Activated T-helper 1 cell treated with anti-CD3 and anti-CD28 coated beads, Interleukin-12 subunit alpha, Interleukin-12 subunit beta, Interleukin-2, Interleukin-4 antibody, amounts not matched to agents 30 ng/mL and 10 ng/mL and 1 ng/mL, durations not matched to agents 14 hours and 24 hours and 36 hours (primary cell): ENCODE measurements at regions of chr6 and their contacts with region 1.

Region 1: GRCh38 chr6:54717849-54718455 is 128.6 kb upstream of the FAM83B start:
- DNase-seq: no peak
- H3K4me3 Mint-ChIP-seq: no peak overlapping the region
- H3K27ac Mint-ChIP-seq: no peak overlapping the region
- H3K4me1 Mint-ChIP-seq: no peaks in the 10 kb centered on the region
- H3K27me3 Mint-ChIP-seq: no peaks in the 10 kb centered on the region

Region 2: DNA sequence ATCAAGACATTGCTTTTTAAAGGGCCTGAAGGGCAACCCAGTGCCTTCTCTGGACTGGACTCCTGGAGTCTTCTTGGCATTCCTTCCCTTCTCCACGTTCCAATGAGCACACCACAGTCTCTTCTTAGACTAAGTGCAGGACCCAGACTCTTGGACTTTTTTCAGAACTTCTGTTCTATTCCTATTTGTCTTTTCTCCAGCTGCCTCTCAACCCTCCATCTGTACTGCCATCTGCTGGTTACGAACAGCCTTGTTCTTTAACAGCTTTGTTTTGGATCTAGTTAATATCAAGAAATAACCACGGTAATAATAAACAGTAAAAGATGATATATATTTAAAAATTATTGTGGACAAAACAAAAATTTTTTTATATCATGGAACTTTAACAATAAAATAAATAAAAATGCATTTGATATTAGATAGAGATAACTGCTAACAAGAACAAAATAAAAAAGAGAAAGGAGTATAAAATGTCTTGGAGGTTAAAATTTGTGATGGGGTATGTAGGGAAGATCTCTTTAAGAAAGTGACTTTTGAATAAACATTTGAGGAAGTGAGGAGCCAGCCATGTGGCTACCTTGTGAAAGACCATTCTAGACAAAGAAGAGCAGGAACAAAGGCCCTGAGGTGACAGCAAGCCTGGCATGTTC is 351.3 kb after region 1 on chr6:
- intact Hi-C with region 1: loop called (anchors 2 kb)
- DNase-seq: no peak
- H3K4me3 Mint-ChIP-seq: no peak overlapping the region
- H3K27ac Mint-ChIP-seq: no peak overlapping the region
- H3K4me1 Mint-ChIP-seq: no peaks in the 10 kb centered on the region
- H3K27me3 Mint-ChIP-seq: no peaks in the 10 kb centered on the region

Region 3: DNA sequence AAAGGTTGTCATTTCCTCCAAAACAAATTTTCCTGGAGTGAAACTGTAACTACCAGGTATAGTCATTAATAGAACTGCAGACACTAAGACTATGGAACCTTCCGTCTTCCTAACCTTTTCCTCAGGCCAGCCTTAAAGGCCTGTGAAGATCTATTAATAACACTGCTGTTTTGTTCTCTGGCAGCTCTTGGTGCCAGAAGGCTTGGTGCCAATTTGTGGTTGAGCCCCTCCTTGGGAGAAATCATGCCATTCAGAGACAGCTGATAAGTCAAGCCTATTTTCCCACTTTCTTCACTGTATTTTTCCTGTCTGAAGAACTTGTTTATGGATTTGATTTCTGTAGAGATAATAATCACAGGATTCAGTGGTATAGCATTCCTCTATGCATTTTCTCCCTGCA is 521.1 kb after region 1 on chr6:
- intact Hi-C with region 1: loop called (anchors 5 kb)
- DNase-seq: no peak
- H3K4me3 Mint-ChIP-seq: no peak overlapping the region
- H3K27ac Mint-ChIP-seq: no peak overlapping the region
- H3K4me1 Mint-ChIP-seq: no peaks in the 10 kb centered on the region
- H3K27me3 Mint-ChIP-seq: no peaks in the 10 kb centered on the region